Sigmoid colon (tissue), 7 donors: ENCODE measurements at regions of chr20 and their contacts with region 1.

Region 1: GRCh38 chr20:37534401-37535157 is 6.9 kb upstream of the BLCAP start:
- DNase-seq: no peak
- H3K4me3 ChIP-seq: no peak overlapping the region
- H3K27ac ChIP-seq: peak overlapping the region in 3 of 4 donors; percentile 11 to 39 (median 27)
- H3K4me1 ChIP-seq: peaks cover 0 to 9% (median 7%) of the 10 kb centered on the region in 4 donors
- H3K27me3 ChIP-seq: no peaks in the 10 kb centered on the region
- CTCF ChIP-seq: peak; percentile 77 to 93 (median 81)
- EP300 ChIP-seq: no peak
- POLR2A ChIP-seq: no peak

Region 2: DNA sequence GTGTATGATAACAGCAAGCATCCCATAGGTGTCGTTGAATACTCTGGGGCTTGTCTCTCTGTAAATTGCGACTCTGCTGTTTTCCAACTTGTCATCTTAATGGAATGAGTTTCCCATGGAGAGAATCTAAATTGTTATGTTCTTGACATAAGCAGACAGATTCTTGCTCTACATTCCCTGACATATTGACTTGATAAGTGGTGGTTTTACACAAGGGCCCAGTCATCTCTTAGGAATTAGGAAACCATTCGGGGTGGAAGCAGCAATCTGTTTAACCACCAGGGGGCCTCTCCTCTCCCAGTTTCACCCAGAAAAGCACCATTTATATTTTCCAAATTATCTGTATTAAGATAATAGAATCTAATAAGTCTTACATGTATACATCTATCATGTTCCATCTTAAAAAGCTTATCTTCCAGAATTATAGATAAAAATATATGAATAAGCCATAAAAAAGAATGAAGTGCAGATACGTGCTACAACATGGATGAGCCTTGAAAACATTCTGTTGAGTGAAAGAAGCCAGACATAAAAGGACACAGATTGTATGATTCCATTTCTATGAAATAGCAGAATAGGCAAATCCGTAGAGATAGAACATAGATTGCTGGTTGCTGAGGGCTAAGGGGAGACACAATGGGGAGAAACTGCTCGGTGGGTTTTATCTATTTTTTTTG is 332.2 kb before region 1 on chr20:
- intact Hi-C with region 1: loop called (anchors 5 kb)
- DNase-seq: no peak
- H3K4me3 ChIP-seq: no peak overlapping the region
- H3K27ac ChIP-seq: peak overlapping the region; percentile 47 to 76 (median 63)
- H3K4me1 ChIP-seq: peaks cover 0 to 14% (median 7%) of the 10 kb centered on the region in 4 donors
- H3K27me3 ChIP-seq: no peaks in the 10 kb centered on the region
- CTCF ChIP-seq: peak; percentile 53 to 79 (median 65)
- EP300 ChIP-seq: no peak
- POLR2A ChIP-seq: no peak

Region 3: GRCh38 chr20:37243076-37243936 is 291.3 kb before region 1 on chr20:
- intact Hi-C with region 1: no loop called
- DNase-seq: no peak
- H3K4me3 ChIP-seq: no peak overlapping the region
- H3K27ac ChIP-seq: peak overlapping the region; percentile 29 to 57 (median 42)
- H3K4me1 ChIP-seq: peaks cover 0 to 20% (median 9%) of the 10 kb centered on the region in 4 donors
- H3K27me3 ChIP-seq: no peaks in the 10 kb centered on the region
- CTCF ChIP-seq: no peak
- EP300 ChIP-seq: no peak
- POLR2A ChIP-seq: no peak

Region 4: GRCh38 chr20:37270576-37271420 is 263.8 kb before region 1 on chr20:
- intact Hi-C with region 1: loop called (anchors 1 kb)
- DNase-seq: no peak
- H3K4me3 ChIP-seq: no peak overlapping the region
- H3K27ac ChIP-seq: no peak overlapping the region
- H3K4me1 ChIP-seq: no peaks in the 10 kb centered on the region
- H3K27me3 ChIP-seq: no peaks in the 10 kb centered on the region
- CTCF ChIP-seq: no peak
- EP300 ChIP-seq: no peak
- POLR2A ChIP-seq: no peak

Region 5: DNA sequence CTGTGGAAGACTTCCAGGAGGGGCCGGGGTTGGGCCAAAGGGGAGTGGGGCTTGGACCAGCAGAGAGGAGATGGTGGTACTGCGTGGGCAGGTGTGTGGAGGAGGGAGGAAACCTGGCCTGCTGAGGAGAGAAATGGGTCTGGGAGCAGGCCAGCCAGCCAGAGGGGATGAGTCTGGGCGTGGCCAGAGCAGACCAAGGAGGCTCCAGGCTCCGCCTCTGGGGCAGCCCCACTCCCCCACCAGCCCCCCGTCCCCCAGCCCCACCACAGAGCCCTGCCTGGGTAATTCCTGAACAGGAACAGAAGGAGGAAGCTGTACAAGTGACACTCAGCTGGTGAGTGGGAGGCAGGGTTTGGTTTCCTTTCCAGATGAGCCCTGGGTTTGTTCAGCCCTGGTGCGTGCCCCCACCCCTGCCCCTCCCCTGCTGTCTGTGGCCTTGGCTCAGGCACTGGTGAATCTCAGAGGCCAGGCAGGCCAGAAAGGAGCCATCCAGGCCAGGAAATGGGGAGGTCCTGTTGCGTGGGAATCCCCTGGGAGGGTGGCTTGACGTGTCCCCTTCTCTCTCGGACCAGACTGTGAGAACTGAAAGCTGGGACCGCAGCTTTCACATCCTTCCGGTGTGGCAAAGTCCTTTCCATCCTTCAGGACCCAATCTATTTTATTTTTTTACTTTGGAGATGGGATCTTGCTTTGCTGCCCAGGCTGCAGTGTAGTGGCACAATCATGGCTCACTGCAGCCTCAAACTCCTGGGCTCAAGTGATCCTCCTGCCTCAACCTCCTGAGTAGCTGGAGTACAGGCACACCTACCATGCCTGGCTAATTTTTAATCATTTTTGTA is 198.0 kb before region 1 on chr20:
- intact Hi-C with region 1: no loop called
- DNase-seq: peak; percentile 78
- H3K4me3 ChIP-seq: peak overlapping the region in 3 of 4 donors; percentile 2 to 23 (median 4)
- H3K27ac ChIP-seq: peak overlapping the region in 3 of 4 donors; percentile 74 to 82 (median 81)
- H3K4me1 ChIP-seq: peaks cover 0 to 47% (median 36%) of the 10 kb centered on the region in 4 donors
- H3K27me3 ChIP-seq: no peaks in the 10 kb centered on the region
- CTCF ChIP-seq: no peak
- EP300 ChIP-seq: no peak
- POLR2A ChIP-seq: no peak

Region 6: GRCh38 chr20:37475252-37475651 is 59.3 kb before region 1 on chr20:
- intact Hi-C with region 1: no loop called
- DNase-seq: peak; percentile 24
- H3K4me3 ChIP-seq: no peak overlapping the region
- H3K27ac ChIP-seq: no peak overlapping the region
- H3K4me1 ChIP-seq: no peaks in the 10 kb centered on the region
- H3K27me3 ChIP-seq: no peaks in the 10 kb centered on the region
- CTCF ChIP-seq: no peak
- EP300 ChIP-seq: no peak
- POLR2A ChIP-seq: no peak